ENCODE measurements at regions of chr14 and their contacts with region 1.

Region 1: GRCh38 chr14:75476274-75476995 is 45.8 kb upstream of the BATF start:
- DNase-seq: peak; percentile 78 to 80
- H3K4me3 ChIP-seq: no peak overlapping the region
- H3K4me3 Mint-ChIP-seq: no peak overlapping the region
- H3K27ac Mint-ChIP-seq: peak overlapping the region; percentile 71
- H3K4me1 ChIP-seq: peaks cover 18% of the 10 kb centered on the region
- H3K4me1 Mint-ChIP-seq: peaks cover 34% of the 10 kb centered on the region
- H3K27me3 ChIP-seq: no peaks in the 10 kb centered on the region
- H3K27me3 Mint-ChIP-seq: no peaks in the 10 kb centered on the region
- CTCF ChIP-seq: peak in 1 of 2 experiments; percentile 9

Region 2: GRCh38 chr14:75333606-75334548 is 142.6 kb before region 1 on chr14:
- CTCF ChIA-PET with region 1: no interaction called
- POLR2A ChIA-PET with region 1: no interaction called
- intact Hi-C with region 1: no loop called
- DNase-seq: no peak
- H3K4me3 ChIP-seq: no peak overlapping the region
- H3K4me3 Mint-ChIP-seq: no peak overlapping the region
- H3K27ac Mint-ChIP-seq: no peak overlapping the region
- H3K4me1 ChIP-seq: no peaks in the 10 kb centered on the region
- H3K4me1 Mint-ChIP-seq: no peaks in the 10 kb centered on the region
- H3K27me3 ChIP-seq: no peaks in the 10 kb centered on the region
- H3K27me3 Mint-ChIP-seq: no peaks in the 10 kb centered on the region
- CTCF ChIP-seq: no peak

Region 3: DNA sequence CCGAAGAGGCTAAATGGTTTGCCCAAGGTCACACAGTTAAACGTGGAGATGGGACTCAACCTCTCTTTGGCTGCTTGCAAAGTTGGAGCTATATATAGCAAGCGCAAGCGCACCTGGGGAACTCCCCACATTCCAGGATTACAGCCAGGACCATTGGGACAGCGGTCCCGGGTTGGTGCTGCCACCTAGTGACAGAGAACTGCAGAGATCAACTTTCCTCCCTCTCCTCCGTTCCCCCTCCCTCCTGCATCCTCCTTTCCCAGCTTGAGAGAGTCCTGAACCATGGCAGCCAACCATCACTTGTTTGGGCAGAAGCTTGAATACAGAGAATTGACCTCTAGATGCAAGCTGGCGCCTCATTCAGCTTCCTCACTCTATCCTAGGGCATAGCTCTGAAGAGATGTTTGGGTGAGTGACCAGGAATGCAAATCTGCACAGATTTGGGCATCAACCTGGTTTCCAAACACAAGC is 84.6 kb after region 1 on chr14:
- CTCF ChIA-PET with region 1: interaction called, 11 read pairs
- POLR2A ChIA-PET with region 1: no interaction called
- intact Hi-C with region 1: no loop called
- DNase-seq: peak; percentile 87 to 90
- H3K4me3 ChIP-seq: no peak overlapping the region
- H3K4me3 Mint-ChIP-seq: no peak overlapping the region
- H3K27ac Mint-ChIP-seq: no peak overlapping the region
- H3K4me1 ChIP-seq: peaks cover 16% of the 10 kb centered on the region
- H3K4me1 Mint-ChIP-seq: peaks cover 29% of the 10 kb centered on the region
- H3K27me3 ChIP-seq: no peaks in the 10 kb centered on the region
- H3K27me3 Mint-ChIP-seq: peaks cover 3% of the 10 kb centered on the region
- CTCF ChIP-seq: peak; percentile 82 to 87